ENCODE measurements at regions of chr15 and their contacts with region 1.

Region 1: GRCh38 chr15:55588070-55588814 is at the start of gene PYGO1:
- DNase-seq: peak; percentile 22
- ATAC-seq: peak; percentile 78
- H3K4me3 ChIP-seq: peak within 1 kb of the TSS; percentile 70
- H3K27ac ChIP-seq: no peak within 1 kb of the TSS
- H3K4me1 ChIP-seq: no peaks in the 10 kb centered on the region
- H3K27me3 ChIP-seq: peaks cover 34% of the 10 kb centered on the region
- CTCF ChIP-seq: no peak
- total RNA-seq, gene PYGO1: 1.8 and 2.0 TPM in 2 replicates

Region 2: GRCh38 chr15:55526559-55527036 is 61.6 kb before region 1 on chr15:
- CTCF ChIA-PET with region 1: no interaction called
- POLR2A ChIA-PET with region 1: no interaction called
- intact Hi-C with region 1: loop called (anchors 5 kb)
- DNase-seq: peak; percentile 53
- ATAC-seq: peak; percentile 55
- H3K4me3 ChIP-seq: no peak overlapping the region
- H3K27ac ChIP-seq: no peak overlapping the region
- H3K4me1 ChIP-seq: no peaks in the 10 kb centered on the region
- H3K27me3 ChIP-seq: no peaks in the 10 kb centered on the region
- CTCF ChIP-seq: peak; percentile 70

Region 3: DNA sequence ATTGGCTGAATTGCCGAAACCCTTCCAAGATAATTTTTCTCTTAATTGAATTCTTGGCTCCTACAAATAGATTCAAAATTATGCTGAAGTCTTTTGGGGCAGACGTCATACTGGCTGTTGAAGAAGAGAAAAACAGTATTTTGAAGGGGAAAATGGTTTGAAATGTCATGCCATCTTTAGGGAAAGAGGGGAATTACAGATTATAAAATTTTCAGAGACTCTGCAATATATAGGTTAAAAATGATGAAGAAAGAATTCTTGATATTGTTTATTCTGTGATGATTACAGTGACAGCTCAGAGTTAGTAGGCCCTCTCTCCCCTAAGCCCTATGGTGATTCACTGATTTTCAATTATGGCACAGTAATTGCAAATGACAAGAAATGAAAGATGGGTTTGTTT is 1874.1 kb after region 1 on chr15:
- CTCF ChIA-PET with region 1: no interaction called
- POLR2A ChIA-PET with region 1: no interaction called
- intact Hi-C with region 1: no loop called
- DNase-seq: peak; percentile 81
- ATAC-seq: peak; percentile 99
- H3K4me3 ChIP-seq: no peak overlapping the region
- H3K27ac ChIP-seq: peak overlapping the region; percentile 80; the same call in 1 of the 2 replicates
- H3K4me1 ChIP-seq: peaks cover 21% of the 10 kb centered on the region
- H3K27me3 ChIP-seq: no peaks in the 10 kb centered on the region
- CTCF ChIP-seq: peak; percentile 54; the same call in 1 of the 2 replicates

Measured in PC-3 (cell line).